Right cardiac atrium (tissue), 5 donors: ENCODE measurements at regions of chr3 and their contacts with region 1.

Region 1: DNA sequence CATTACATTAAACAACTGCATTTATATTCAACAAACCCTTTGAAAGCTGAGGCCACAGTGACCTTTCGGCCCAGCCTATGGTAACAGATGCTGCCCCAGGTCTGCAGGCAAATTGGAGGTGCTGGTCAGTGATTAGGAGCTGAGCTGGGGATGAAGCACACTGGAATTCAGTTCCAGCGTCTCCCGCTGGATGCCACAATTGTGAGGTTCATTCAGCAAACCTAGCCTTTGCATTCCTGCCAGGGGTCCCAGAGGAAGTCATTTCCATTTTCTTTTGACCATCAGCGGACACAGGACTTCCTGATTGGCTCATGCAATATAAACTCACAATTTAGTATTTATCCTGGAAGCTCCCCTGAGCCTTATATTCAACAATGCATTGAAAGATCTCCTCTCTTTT is 89.5 kb downstream of the IL20RB start:
- DNase-seq: no peak
- ATAC-seq: no peak
- H3K4me3 ChIP-seq: no peak overlapping the region
- H3K27ac ChIP-seq: no peak overlapping the region
- H3K4me1 ChIP-seq: no peaks in the 10 kb centered on the region
- H3K27me3 ChIP-seq: peaks cover 3% of the 10 kb centered on the region

Region 2: GRCh38 chr3:136929984-136930670 is 117.1 kb before region 1 on chr3:
- intact Hi-C with region 1: no loop called
- DNase-seq: peak; percentile 55 to 83 (median 74)
- ATAC-seq: peak; percentile 80 to 88
- H3K4me3 ChIP-seq: peak overlapping the region; percentile 25
- H3K27ac ChIP-seq: no peak overlapping the region
- H3K4me1 ChIP-seq: peaks cover 1% of the 10 kb centered on the region
- H3K27me3 ChIP-seq: no peaks in the 10 kb centered on the region

Region 3: GRCh38 chr3:137332297-137332696 is 285.1 kb after region 1 on chr3:
- intact Hi-C with region 1: no loop called
- DNase-seq: no peak
- ATAC-seq: no peak
- H3K4me3 ChIP-seq: no peak overlapping the region
- H3K27ac ChIP-seq: no peak overlapping the region
- H3K4me1 ChIP-seq: no peaks in the 10 kb centered on the region
- H3K27me3 ChIP-seq: no peaks in the 10 kb centered on the region

Region 4: DNA sequence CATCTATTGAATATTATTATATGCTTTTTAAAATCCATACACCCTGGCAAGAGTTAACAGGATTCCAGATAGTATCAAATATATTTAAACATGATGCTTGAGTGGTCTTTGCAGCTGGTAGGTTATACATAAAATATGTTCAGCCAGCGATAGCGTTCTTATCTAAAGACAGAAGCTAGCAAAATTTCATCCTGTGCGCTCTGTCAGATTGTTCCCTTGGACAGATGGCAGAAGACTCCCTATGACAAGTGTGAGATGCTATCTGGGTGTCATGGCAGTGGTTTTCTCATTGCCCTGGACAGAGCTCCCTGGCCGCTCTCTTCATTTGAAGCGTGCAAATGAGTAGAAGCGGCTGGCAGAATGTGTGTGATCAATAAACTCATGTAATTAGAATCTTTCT is 541.6 kb after region 1 on chr3:
- intact Hi-C with region 1: no loop called
- DNase-seq: no peak
- ATAC-seq: no peak
- H3K4me3 ChIP-seq: no peak overlapping the region
- H3K27ac ChIP-seq: no peak overlapping the region
- H3K4me1 ChIP-seq: no peaks in the 10 kb centered on the region
- H3K27me3 ChIP-seq: no peaks in the 10 kb centered on the region

Region 5: GRCh38 chr3:137946345-137946973 is 899.2 kb after region 1 on chr3:
- intact Hi-C with region 1: loop called in 1 of 4 experiments (anchors 10 kb)
- DNase-seq: peak; percentile 33 to 73 (median 60)
- ATAC-seq: peak; percentile 16 to 48
- H3K4me3 ChIP-seq: no peak overlapping the region
- H3K27ac ChIP-seq: no peak overlapping the region
- H3K4me1 ChIP-seq: no peaks in the 10 kb centered on the region
- H3K27me3 ChIP-seq: no peaks in the 10 kb centered on the region